ENCODE measurements at regions of chr11 and their contacts with region 1.

Region 1: GRCh38 chr11:8688414-8689362 is 6.1 kb downstream of the RPL27A start:
- DNase-seq: peak; percentile 95
- H3K4me3 ChIP-seq: peak overlapping the region; percentile 52 to 66
- H3K27ac ChIP-seq: peak overlapping the region; percentile 66 to 78
- H3K4me1 ChIP-seq: peaks cover 13% of the 10 kb centered on the region
- H3K27me3 ChIP-seq: no peaks in the 10 kb centered on the region
- CTCF ChIP-seq: peak in 1 of 3 experiments; percentile 38
- POLR2A ChIP-seq: no peak

Region 2: DNA sequence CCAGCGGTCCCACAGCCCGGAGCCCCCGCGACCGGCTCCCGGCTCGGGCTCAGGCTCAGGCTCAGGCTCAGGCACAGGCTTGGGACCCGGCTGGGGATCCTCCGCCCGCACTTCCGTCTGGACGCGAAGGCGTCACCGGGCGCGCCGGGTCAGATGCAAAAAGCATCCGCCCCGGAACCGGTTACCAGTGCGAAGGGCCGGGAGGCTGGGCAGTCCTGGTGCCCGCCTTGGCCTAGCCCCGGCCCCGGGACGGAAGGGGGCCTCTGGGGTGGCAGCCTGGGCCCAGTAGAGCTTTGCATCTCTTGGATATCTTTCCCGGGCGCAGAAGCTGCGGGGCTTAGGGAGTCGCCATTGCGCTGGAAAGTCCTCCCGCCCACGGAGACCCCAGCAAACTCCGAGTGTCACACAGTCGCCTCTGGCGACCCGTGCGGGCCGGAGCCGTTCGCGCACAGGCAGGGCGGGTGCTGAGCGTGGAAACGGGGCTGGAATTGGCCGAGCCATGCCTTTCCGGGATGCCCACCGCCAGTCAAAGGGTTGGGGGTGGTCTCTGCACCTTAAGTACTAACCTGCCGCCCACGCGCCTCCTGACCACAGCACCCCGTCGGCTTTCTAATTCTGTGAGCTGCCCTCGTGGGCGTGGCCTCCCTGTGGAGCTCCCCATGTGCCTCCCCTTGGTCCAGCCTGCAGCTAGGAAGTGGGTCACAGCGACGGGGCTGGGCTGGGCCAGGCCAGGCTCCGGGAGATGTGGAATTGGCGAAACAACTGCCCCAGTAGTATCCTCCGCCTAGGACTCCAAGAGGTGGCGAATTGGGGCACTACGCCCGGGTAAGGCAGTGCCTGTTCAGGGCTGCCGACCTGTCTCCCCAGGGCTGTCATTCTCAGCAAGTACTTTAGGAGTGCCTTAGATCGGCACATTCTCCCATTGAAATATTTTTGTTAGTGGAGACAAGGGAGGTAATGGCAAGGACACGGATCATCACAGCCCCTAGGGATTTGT is 275.9 kb after region 1 on chr11 and contains the start of gene TMEM9B:
- intact Hi-C with region 1: loop called (anchors 10 kb)
- DNase-seq: peak; percentile 94
- H3K4me3 ChIP-seq: peak within 1 kb of the TSS; percentile 82 to 86
- H3K27ac ChIP-seq: peak within 1 kb of the TSS; percentile 81 to 94
- H3K4me1 ChIP-seq: peaks cover 15% of the 10 kb centered on the region
- H3K27me3 ChIP-seq: no peaks in the 10 kb centered on the region
- CTCF ChIP-seq: no peak
- POLR2A ChIP-seq: peak; percentile 14
- total RNA-seq, gene TMEM9B: 43.3 to 43.5 TPM